Activated CD4-positive, alpha-beta T cell treated with anti-CD3 and anti-CD28 coated beads, Interleukin-2, amount 10 ng/mL, durations not matched to agents 24 days and 14 days (primary cell): ENCODE measurements at regions of chr17 and their contacts with region 1.

Region 1: GRCh38 chr17:42112552-42113176 is at the start of gene DHX58:
- DNase-seq: peak; percentile 96
- H3K4me3 Mint-ChIP-seq: peak within 1 kb of the TSS; percentile 94
- H3K27ac Mint-ChIP-seq: peak within 1 kb of the TSS; percentile 93
- H3K4me1 Mint-ChIP-seq: peaks cover 42% of the 10 kb centered on the region
- H3K27me3 Mint-ChIP-seq: no peaks in the 10 kb centered on the region
- total RNA-seq, gene DHX58: 22.9 and 25.8 TPM in 2 replicates

Region 2: DNA sequence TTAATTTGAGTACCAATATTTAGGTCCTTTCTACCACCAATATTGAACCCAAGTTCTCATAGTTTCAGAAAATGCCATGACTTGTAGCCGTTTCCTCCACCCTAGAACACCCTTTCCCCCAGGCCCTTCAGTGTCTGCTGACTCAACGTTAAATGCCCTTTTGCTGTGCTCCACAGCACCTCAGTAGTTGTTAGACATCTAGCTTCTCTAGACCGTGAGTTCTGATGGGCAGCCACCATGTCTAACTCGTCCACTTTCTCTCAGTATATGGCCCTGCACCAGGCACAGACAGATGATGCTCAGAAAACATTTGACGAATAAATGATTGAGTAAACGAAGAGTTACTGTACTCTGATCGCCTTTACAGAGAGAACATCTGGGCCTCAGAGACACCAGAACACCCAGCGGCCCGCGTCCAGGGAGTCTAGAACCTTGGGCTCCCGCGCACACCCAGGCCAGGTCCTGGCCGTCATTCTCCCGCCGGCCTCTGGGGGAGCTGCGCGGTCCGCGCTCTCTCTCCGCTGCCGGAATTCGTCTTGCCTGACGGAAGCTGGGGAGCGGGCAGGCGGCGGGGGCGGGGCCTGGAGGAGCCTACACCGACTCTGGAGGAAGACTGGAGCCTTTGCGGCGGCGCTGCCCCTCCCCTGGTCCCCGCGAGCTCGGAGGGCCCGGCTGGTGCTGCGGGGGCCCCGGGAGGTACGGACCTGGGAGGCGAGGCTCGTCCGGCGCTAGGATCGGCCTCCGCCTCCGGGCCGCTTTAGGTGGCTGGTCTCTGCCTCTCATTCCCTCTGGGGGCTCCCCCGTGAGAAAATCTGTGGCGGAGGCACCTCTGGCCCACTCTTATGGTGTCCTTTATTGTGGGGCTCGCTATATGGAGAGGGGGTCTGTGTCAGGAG is 92.9 kb before region 1 on chr17 and contains the start of gene NKIRAS2:
- intact Hi-C with region 1: loop called (anchors 2 kb)
- DNase-seq: peak; percentile 99
- H3K4me3 Mint-ChIP-seq: peak within 1 kb of the TSS; percentile 99
- H3K27ac Mint-ChIP-seq: peak within 1 kb of the TSS; percentile 85
- H3K4me1 Mint-ChIP-seq: peaks cover 47% of the 10 kb centered on the region
- H3K27me3 Mint-ChIP-seq: no peaks in the 10 kb centered on the region
- total RNA-seq, gene NKIRAS2: 29.5 and 30.3 TPM in 2 replicates

Region 3: GRCh38 chr17:42067351-42068091 is 45.1 kb before region 1 on chr17:
- intact Hi-C with region 1: loop called (anchors 2 kb)
- DNase-seq: peak; percentile 93
- H3K4me3 Mint-ChIP-seq: no peak overlapping the region
- H3K27ac Mint-ChIP-seq: no peak overlapping the region
- H3K4me1 Mint-ChIP-seq: peaks cover 18% of the 10 kb centered on the region
- H3K27me3 Mint-ChIP-seq: peaks cover 11% of the 10 kb centered on the region

Region 4: GRCh38 chr17:42183741-42184711 is 71.4 kb after region 1 on chr17:
- intact Hi-C with region 1: loop called (anchors 5 kb)
- DNase-seq: peak; percentile 96
- H3K4me3 Mint-ChIP-seq: peak overlapping the region; percentile 89
- H3K27ac Mint-ChIP-seq: peak overlapping the region; percentile 93
- H3K4me1 Mint-ChIP-seq: peaks cover 34% of the 10 kb centered on the region
- H3K27me3 Mint-ChIP-seq: peaks cover 17% of the 10 kb centered on the region